ENCODE measurements at regions of chr13 and their contacts with region 1.

Region 1: GRCh38 chr13:33817901-33818706 is at the start of gene RFC3:
- DNase-seq: peak; percentile 84
- ATAC-seq: peak; percentile 94
- H3K4me3 Mint-ChIP-seq: peak within 1 kb of the TSS; percentile 93
- H3K27ac Mint-ChIP-seq: peak within 1 kb of the TSS; percentile 91
- H3K4me1 Mint-ChIP-seq: peaks cover 19% of the 10 kb centered on the region
- H3K27me3 Mint-ChIP-seq: peaks cover 5% of the 10 kb centered on the region
- CTCF ChIP-seq: no peak
- total RNA-seq, gene RFC3: 13.5 and 14.3 TPM in 2 replicates

Region 2: GRCh38 chr13:31846182-31846950 is 1971.7 kb before region 1 on chr13:
- CTCF ChIA-PET with region 1: no interaction called
- POLR2A ChIA-PET with region 1: no interaction called
- intact Hi-C with region 1: loop called (anchors 2 kb)
- DNase-seq: peak; percentile 80
- ATAC-seq: peak; percentile 98
- H3K4me3 Mint-ChIP-seq: peak overlapping the region; percentile 83
- H3K27ac Mint-ChIP-seq: no peak overlapping the region
- H3K4me1 Mint-ChIP-seq: peaks cover 9% of the 10 kb centered on the region
- H3K27me3 Mint-ChIP-seq: peaks cover 27% of the 10 kb centered on the region
- CTCF ChIP-seq: no peak

Region 3: DNA sequence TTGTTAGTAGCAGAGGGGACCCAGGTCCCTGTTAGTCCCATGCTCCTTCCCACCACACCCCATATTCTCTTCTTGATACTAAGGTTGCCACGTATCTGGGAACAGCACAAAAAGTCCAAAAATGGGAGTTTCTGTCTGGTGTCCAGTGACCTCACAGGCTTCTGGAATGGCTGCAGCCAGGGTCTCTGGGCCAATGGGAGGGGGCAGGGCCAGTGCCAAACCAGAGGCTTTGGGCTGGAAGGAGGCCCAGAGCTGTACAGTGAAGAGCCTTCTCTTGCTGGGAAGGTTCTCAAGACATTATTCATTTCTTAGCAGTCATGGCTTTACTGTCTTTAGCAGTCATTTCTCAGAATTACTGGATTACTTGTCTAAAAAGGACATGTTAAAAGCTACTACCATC is 1667.3 kb before region 1 on chr13:
- CTCF ChIA-PET with region 1: no interaction called
- POLR2A ChIA-PET with region 1: no interaction called
- intact Hi-C with region 1: no loop called
- DNase-seq: no peak
- ATAC-seq: no peak
- H3K4me3 Mint-ChIP-seq: no peak overlapping the region
- H3K27ac Mint-ChIP-seq: no peak overlapping the region
- H3K4me1 Mint-ChIP-seq: no peaks in the 10 kb centered on the region
- H3K27me3 Mint-ChIP-seq: no peaks in the 10 kb centered on the region
- CTCF ChIP-seq: no peak

Region 4: DNA sequence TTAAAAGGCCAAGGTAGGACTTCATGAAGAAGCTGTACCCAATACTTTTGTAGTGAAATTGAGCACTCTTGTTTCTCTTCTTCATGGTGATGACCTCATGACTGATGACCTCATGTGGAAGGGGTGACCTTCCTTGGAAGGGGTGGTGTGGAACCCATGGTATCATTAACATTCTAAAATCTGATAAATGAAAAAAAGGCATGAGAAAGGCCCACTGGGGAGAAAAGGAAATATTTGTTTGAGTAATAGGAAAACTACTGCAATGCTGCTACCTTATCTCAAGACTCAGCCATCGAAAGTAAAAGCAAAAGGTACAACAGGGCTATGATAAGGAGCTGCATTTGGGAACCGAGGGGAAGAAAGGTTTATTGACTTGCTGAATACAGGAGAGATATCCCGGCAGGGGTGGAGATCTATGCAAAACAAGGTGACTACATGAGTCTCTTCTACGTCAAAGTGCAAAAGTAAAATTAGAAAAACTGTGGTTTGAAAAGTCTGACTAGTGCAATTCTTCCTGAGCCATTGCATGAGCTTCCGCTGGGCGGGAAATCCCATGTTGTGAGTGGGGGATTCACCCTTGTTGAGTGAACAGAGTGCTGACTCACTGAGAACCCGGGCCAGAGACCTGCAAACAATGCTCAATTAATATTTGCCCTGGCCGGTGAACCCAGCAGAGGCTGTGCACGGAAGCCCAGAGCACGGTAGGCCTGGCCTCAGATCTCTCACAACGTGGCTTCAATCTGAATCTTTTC is 139.0 kb before region 1 on chr13:
- CTCF ChIA-PET with region 1: no interaction called
- POLR2A ChIA-PET with region 1: no interaction called
- intact Hi-C with region 1: loop called (anchors 1 kb)
- DNase-seq: peak; percentile 45
- ATAC-seq: peak; percentile 94
- H3K4me3 Mint-ChIP-seq: peak overlapping the region; percentile 74
- H3K27ac Mint-ChIP-seq: peak overlapping the region; percentile 74
- H3K4me1 Mint-ChIP-seq: peaks cover 12% of the 10 kb centered on the region
- H3K27me3 Mint-ChIP-seq: no peaks in the 10 kb centered on the region
- CTCF ChIP-seq: no peak

Region 5: DNA sequence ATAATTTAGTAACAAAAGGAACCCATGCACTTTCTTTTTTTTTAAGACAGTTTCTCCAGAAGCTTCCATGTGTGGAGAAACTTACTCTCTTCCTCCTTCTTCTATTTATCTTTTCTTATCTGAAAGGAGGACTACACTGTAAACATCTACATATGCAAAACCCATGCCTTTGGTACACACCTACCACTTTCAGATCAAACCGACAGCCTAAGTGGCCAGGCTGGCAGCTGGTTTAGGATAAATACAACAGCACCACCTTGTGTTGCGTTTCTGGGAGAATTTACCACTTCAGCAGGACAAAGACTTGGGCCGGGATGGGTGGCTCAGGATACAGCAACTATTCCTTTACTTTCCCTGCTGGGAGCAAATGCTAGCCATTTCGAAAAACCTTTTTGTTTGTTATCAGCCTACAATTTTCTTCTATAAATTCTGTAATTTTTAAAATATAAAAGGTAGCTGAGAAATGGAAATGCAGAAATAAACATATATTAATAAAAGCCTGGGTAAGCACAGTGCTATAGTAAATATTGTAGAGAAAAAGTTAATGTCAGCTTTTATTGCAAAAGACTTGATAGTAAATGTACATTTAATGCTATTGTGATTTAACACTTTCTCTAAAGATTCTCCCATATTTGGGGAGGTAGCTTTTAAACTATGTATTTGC is 94.2 kb before region 1 on chr13:
- CTCF ChIA-PET with region 1: no interaction called
- POLR2A ChIA-PET with region 1: no interaction called
- intact Hi-C with region 1: loop called (anchors 1 kb)
- DNase-seq: no peak
- ATAC-seq: peak; percentile 72
- H3K4me3 Mint-ChIP-seq: no peak overlapping the region
- H3K27ac Mint-ChIP-seq: no peak overlapping the region
- H3K4me1 Mint-ChIP-seq: peaks cover 21% of the 10 kb centered on the region
- H3K27me3 Mint-ChIP-seq: peaks cover 21% of the 10 kb centered on the region
- CTCF ChIP-seq: no peak

Region 6: GRCh38 chr13:33787051-33787591 is 31.0 kb before region 1 on chr13:
- CTCF ChIA-PET with region 1: no interaction called
- POLR2A ChIA-PET with region 1: no interaction called
- intact Hi-C with region 1: loop called (anchors 2 kb)
- DNase-seq: no peak
- ATAC-seq: peak; percentile 37
- H3K4me3 Mint-ChIP-seq: peak overlapping the region; percentile 79
- H3K27ac Mint-ChIP-seq: peak overlapping the region; percentile 59
- H3K4me1 Mint-ChIP-seq: peaks cover 11% of the 10 kb centered on the region
- H3K27me3 Mint-ChIP-seq: no peaks in the 10 kb centered on the region
- CTCF ChIP-seq: no peak

Region 7: GRCh38 chr13:34941835-34942731 is 1124.0 kb after region 1 on chr13 and contains the start of gene NBEA:
- CTCF ChIA-PET with region 1: no interaction called
- POLR2A ChIA-PET with region 1: no interaction called
- intact Hi-C with region 1: loop called (anchors 5 kb)
- DNase-seq: peak; percentile 82
- ATAC-seq: peak; percentile 81
- H3K4me3 Mint-ChIP-seq: peak within 1 kb of the TSS; percentile 90
- H3K27ac Mint-ChIP-seq: peak within 1 kb of the TSS; percentile 76
- H3K4me1 Mint-ChIP-seq: peaks cover 27% of the 10 kb centered on the region
- H3K27me3 Mint-ChIP-seq: peaks cover 14% of the 10 kb centered on the region
- CTCF ChIP-seq: no peak
- total RNA-seq, gene NBEA: 2.9 and 3.9 TPM in 2 replicates

Measured in activated B cell treated with CpG ODN at 0.5 μM for 24 hours (primary cell).